ENCODE measurements at regions of chr5 and their contacts with region 1.

Region 1: GRCh38 chr5:135034236-135034962 is 371 bp upstream of the PITX1 start:
- DNase-seq: peak; percentile 90
- H3K4me3 ChIP-seq: peak overlapping the region; percentile 84
- H3K27ac ChIP-seq: peak overlapping the region; percentile 80
- H3K4me1 ChIP-seq: peaks cover 50% of the 10 kb centered on the region
- CTCF ChIP-seq: no peak

Region 2: GRCh38 chr5:133032852-133033742 is 2001.3 kb before region 1 on chr5:
- CTCF ChIA-PET with region 1: no interaction called
- POLR2A ChIA-PET with region 1: no interaction called
- intact Hi-C with region 1: loop called (anchors 5 kb)
- DNase-seq: peak; percentile 90
- H3K4me3 ChIP-seq: peak overlapping the region; percentile 44
- H3K27ac ChIP-seq: peak overlapping the region; percentile 97
- H3K4me1 ChIP-seq: peaks cover 72% of the 10 kb centered on the region
- CTCF ChIP-seq: no peak

Region 3: DNA sequence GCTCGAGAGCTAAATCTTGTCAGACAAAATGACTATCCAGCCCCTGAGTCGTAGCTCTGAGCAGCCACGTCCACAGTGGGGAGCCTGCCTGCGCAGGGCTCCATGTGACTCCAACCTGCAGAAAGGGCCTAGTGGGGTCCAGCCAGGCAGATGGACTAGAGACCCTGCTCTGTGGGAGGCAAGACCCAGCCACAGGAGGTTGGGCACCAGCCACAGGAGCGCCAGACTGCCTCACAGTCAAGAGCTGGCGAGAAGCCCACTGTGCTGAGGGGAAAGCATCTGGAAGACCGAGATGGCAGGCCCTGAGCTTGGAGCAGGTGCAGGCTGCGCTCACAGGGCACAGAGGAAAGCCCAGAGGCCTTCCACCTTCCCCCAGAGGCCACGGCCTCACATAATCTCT is 1127.3 kb before region 1 on chr5:
- CTCF ChIA-PET with region 1: no interaction called
- POLR2A ChIA-PET with region 1: no interaction called
- intact Hi-C with region 1: loop called (anchors 5 kb)
- DNase-seq: no peak
- H3K4me3 ChIP-seq: no peak overlapping the region
- H3K27ac ChIP-seq: no peak overlapping the region
- H3K4me1 ChIP-seq: peaks cover 10% of the 10 kb centered on the region
- CTCF ChIP-seq: no peak

Region 4: DNA sequence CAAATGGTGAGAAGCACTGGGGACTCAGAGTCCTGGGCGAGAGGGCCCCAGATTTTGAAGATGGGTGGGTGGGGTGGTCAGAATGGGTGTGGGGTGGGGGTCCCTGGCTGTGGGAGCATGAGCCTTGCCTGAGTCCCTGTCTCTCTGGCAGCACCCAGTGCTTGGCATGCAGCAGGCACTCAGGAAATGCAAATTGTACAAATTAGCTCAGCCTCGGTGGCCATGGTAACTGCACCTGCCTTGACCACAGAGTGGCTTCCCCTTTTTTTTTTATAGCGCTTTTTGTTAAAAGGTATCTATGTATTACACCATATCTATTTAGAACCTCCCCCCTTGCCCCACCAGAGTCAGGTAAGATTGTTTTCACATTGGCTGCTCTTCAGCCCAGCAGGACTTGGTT is 18.9 kb after region 1 on chr5:
- CTCF ChIA-PET with region 1: interaction called, 3 read pairs
- POLR2A ChIA-PET with region 1: interaction called, 19 read pairs
- intact Hi-C with region 1: loop called (anchors 1 kb)
- DNase-seq: peak; percentile 98
- H3K4me3 ChIP-seq: peak overlapping the region; percentile 61
- H3K27ac ChIP-seq: peak overlapping the region; percentile 97
- H3K4me1 ChIP-seq: peaks cover 98% of the 10 kb centered on the region
- CTCF ChIP-seq: no peak